ENCODE measurements at regions of chr1 and their contacts with region 1.

Region 1: DNA sequence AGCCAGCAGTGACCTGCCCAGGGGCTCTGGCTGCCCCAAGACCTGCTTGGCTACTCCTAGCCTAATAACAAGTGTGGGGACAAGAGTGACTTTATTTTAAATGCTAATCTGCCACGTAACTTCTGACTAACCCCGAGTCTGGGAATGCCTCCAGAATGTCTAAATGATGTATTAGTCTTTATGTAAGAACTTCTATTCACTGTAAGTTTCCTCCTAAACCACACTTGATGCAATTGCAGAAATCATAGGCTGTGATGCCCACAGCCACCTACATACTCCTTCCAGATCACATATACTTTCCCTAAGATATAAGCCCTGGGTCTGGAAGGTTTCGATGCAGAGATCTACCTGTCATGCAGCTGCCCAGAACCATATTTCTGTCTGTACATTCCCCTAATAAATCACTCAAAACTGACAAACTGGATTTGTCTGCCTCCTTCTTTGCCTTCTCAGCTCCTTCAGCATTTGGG is 5.9 kb upstream of the VPS45 start:
- DNase-seq: no peak
- H3K4me3 ChIP-seq: no peak overlapping the region
- H3K4me3 Mint-ChIP-seq: no peak overlapping the region
- H3K27ac ChIP-seq: no peak overlapping the region
- H3K27ac Mint-ChIP-seq: no peak overlapping the region
- H3K4me1 ChIP-seq: peaks cover 8% of the 10 kb centered on the region
- H3K4me1 Mint-ChIP-seq: peaks cover 5 to 10% (median 8%) of the 10 kb centered on the region in 3 donors
- H3K27me3 ChIP-seq: no peaks in the 10 kb centered on the region
- H3K27me3 Mint-ChIP-seq: no peaks in the 10 kb centered on the region

Region 2: GRCh38 chr1:150121236-150121862 is 59.7 kb after region 1 on chr1:
- CTCF ChIA-PET with region 1: no interaction called
- POLR2A ChIA-PET with region 1: no interaction called
- DNase-seq: no peak
- H3K4me3 ChIP-seq: no peak overlapping the region
- H3K4me3 Mint-ChIP-seq: no peak overlapping the region
- H3K27ac ChIP-seq: no peak overlapping the region
- H3K27ac Mint-ChIP-seq: peak overlapping the region in 1 of 8 donors; percentile 69
- H3K4me1 ChIP-seq: no peaks in the 10 kb centered on the region
- H3K4me1 Mint-ChIP-seq: peaks cover 6 to 25% (median 21%) of the 10 kb centered on the region in 3 donors
- H3K27me3 ChIP-seq: no peaks in the 10 kb centered on the region
- H3K27me3 Mint-ChIP-seq: no peaks in the 10 kb centered on the region

Region 3: GRCh38 chr1:150332651-150333290 is 271.1 kb after region 1 on chr1:
- CTCF ChIA-PET with region 1: no interaction called
- POLR2A ChIA-PET with region 1: interaction called, 12 read pairs
- DNase-seq: no peak
- H3K4me3 ChIP-seq: no peak overlapping the region
- H3K4me3 Mint-ChIP-seq: no peak overlapping the region
- H3K27ac ChIP-seq: no peak overlapping the region
- H3K27ac Mint-ChIP-seq: peak overlapping the region in 1 of 8 donors; percentile 19
- H3K4me1 ChIP-seq: no peaks in the 10 kb centered on the region
- H3K4me1 Mint-ChIP-seq: peaks cover 0 to 12% (median 9%) of the 10 kb centered on the region in 3 donors
- H3K27me3 ChIP-seq: no peaks in the 10 kb centered on the region
- H3K27me3 Mint-ChIP-seq: no peaks in the 10 kb centered on the region

Measured in CD8-positive, alpha-beta memory T cell (primary cell).